ENCODE measurements at regions of chr2 and their contacts with region 1.

Region 1: GRCh38 chr2:168705534-168706470 is 96.6 kb upstream of the NOSTRIN start:
- DNase-seq: peak in 3 of 14 experiments; percentile 17 to 29 (median 21)
- ATAC-seq: no peak
- H3K4me3 ChIP-seq: no peak overlapping the region
- H3K4me3 Mint-ChIP-seq: no peak overlapping the region
- H3K27ac ChIP-seq: no peak overlapping the region
- H3K27ac Mint-ChIP-seq: no peak overlapping the region
- H3K4me1 ChIP-seq: no peaks in the 10 kb centered on the region
- H3K4me1 Mint-ChIP-seq: peaks cover 4% of the 10 kb centered on the region
- H3K27me3 ChIP-seq: no peaks in the 10 kb centered on the region
- H3K27me3 Mint-ChIP-seq: no peaks in the 10 kb centered on the region
- CTCF ChIP-seq: no peak

Region 2: DNA sequence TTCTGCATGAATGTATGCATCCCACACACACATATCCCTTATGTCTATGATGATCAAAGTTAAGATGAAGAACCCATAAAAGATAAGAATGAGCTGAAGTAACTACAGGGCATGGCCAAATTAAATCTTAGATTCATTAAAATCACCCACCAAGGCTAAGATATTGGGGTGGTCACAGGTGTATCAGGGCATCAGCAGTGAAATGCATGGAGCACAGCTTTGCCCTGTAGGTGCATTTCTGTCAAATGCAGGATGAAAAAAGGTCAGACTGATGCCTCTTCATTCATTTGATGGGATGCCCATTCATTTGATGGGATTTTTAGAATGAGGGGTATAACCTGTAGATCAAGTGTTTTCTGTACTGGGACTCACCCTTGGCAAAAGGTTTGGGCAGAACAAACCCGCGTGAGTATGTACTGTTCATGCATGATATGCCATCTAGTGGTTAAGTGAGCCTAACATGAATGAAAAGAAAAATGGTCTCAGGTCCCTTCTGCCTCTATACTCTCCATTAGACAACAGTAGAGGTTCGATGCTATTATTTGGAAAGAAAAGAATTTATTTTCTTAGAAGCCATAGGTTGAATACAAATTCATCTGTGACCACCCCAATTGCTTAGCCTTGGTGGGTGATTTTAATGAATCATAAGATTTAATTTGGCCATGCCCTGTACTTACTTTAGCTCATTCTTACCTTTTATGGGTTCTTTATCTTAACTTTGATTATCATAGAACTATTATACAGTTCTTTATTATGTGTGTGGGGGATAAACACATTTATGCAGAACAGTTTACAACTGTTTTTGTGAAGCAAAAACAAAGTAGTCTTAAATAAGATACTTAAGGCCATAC is 53.4 kb after region 1 on chr2:
- CTCF ChIA-PET with region 1: no interaction called
- POLR2A ChIA-PET with region 1: no interaction called
- intact Hi-C with region 1: loop called in 1 of 2 experiments (anchors 5 kb)
- DNase-seq: peak in 7 of 14 experiments; percentile 8 to 70 (median 33)
- ATAC-seq: peak; percentile 72
- H3K4me3 ChIP-seq: no peak overlapping the region
- H3K4me3 Mint-ChIP-seq: no peak overlapping the region
- H3K27ac ChIP-seq: no peak overlapping the region
- H3K27ac Mint-ChIP-seq: no peak overlapping the region
- H3K4me1 ChIP-seq: peaks cover 37% of the 10 kb centered on the region
- H3K4me1 Mint-ChIP-seq: peaks cover 50% of the 10 kb centered on the region
- H3K27me3 ChIP-seq: no peaks in the 10 kb centered on the region
- H3K27me3 Mint-ChIP-seq: no peaks in the 10 kb centered on the region
- CTCF ChIP-seq: peak; percentile 77

Region 3: DNA sequence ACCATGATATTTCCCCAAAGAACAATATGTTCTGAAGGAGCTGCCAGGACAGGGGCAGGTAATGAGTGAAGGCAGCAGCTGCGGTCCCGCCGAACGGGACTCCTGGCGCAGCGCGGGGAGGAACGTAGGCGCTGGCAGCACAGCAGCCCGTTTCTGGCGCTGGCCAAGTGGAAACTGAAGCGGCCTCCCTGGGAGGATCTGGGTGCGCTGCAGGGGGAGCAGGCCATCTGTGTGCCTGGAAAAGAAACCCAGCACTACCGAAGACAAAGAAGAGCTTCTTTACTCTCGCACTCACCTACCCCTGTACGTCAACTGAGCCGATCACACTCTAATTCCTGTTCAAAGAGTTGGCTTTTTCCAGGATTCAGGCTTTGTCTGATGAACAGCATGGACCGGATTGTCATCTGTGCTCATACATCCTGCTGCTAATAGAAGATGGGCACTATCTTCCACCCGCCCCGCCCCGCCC is 207.1 kb after region 1 on chr2:
- CTCF ChIA-PET with region 1: no interaction called
- POLR2A ChIA-PET with region 1: no interaction called
- intact Hi-C with region 1: loop called in 1 of 2 experiments (anchors 10 kb)
- DNase-seq: peak in 1 of 14 experiments; percentile 7
- ATAC-seq: no peak
- H3K4me3 ChIP-seq: peak overlapping the region; percentile 8
- H3K4me3 Mint-ChIP-seq: no peak overlapping the region
- H3K27ac ChIP-seq: no peak overlapping the region
- H3K27ac Mint-ChIP-seq: no peak overlapping the region
- H3K4me1 ChIP-seq: peaks cover 8% of the 10 kb centered on the region
- H3K4me1 Mint-ChIP-seq: peaks cover 8% of the 10 kb centered on the region
- H3K27me3 ChIP-seq: peaks cover 5 to 7% of the 10 kb centered on the region in 2 experiments
- H3K27me3 Mint-ChIP-seq: peaks cover 35% of the 10 kb centered on the region
- CTCF ChIP-seq: no peak

Measured in CD4-positive, alpha-beta T cell (primary cell).